Astrocyte of the cerebellum (primary cell): ENCODE measurements at regions of chr10 and their contacts with region 1.

Region 1: GRCh38 chr10:132690821-132691610 is 94.9 kb downstream of the NKX6-2 start:
- DNase-seq: no peak
- H3K4me3 ChIP-seq: no peak overlapping the region
- CTCF ChIP-seq: no peak

Region 2: DNA sequence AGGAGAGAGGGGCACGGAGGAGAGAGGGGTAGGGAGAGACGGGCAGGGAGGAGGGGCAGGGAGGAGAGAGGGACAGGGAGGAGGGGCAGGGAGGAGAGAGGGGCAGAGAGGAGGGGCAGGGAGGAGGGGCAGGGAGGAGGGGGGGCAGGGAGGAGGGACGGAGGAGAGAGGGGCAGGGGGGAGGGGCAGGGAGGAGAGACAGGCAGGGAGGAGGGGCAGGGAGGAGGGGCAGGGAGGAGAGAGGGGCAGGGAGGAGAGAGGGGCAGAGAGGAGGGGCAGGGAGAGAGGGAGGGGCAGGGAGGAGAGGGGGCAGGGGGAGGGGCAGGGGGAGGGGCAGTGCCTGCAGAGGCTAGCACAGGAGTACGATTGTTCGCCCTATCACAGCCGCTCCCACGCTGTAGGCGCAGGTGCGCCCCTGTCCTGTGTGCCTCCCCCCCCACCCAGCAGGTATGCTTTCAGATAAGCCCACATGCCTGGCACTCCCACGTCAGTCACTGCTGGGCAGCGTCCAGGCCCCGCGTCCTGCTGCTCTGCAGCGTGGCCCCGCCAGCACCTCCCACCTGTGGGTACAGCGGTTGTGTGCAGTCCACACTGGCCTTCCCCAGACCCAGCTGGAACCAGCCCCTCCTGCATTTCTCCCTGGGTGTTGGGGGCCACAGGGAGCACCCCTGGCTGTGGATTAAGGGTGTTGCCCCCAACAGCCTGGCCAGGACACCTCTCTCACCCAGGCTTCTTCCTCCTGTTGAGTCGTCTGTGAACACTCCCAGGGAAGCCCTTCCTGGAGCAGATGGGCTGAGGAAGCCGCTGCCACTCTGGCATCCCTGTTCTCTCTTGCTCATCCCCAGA is 84.1 kb after region 1 on chr10:
- in situ Hi-C with region 1: loop called (anchors 5 kb)
- DNase-seq: no peak
- H3K4me3 ChIP-seq: no peak overlapping the region
- CTCF ChIP-seq: no peak